SK-N-SH (cell line): ENCODE measurements at regions of chr3 and their contacts with region 1.

Region 1: DNA sequence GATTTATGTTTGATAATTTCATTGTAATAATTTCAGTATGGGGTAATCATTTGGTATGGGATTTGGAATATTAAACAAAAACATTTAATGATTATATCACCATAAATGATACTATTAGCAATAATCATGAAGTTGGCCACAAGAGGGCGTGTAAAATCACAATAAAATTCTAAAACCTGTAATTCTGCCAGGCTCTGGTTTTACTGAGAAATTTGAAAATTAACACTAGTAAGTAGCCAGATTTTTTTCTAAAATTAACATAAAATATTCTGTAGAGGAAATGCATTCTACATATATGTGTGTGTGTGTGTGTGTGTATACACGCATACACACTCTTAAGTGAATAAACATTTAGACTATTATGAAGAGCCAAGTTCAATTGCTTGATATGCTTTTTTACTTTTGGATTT is 40.5 kb downstream of the FEZF2 start:
- DNase-seq: peak; percentile 9
- H3K4me3 ChIP-seq: no peak overlapping the region
- H3K27ac ChIP-seq: no peak overlapping the region
- H3K4me1 ChIP-seq: no peaks in the 10 kb centered on the region
- H3K27me3 ChIP-seq: no peaks in the 10 kb centered on the region
- CTCF ChIP-seq: peak; percentile 83
- EP300 ChIP-seq: no peak
- RAD21 ChIP-seq: peak; percentile 62

Region 2: DNA sequence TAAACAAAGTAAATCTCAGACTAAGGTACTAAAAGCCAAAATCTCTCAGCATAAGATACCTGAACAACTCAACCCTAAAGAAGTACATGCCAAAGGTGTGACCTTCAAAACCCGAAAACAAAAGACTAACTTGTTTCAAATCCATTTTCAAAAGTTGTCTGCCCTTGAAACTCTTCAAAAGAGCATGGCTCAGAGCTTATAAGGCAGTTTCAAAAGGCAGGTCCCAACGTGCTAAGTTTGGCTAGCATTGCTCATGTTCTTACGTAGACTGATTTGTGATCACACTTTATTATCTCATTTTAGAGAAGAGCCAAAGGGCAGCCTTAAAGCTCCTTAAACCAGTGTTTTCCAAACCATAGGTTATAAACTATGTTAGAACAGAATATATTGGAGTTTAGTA is 71.7 kb before region 1 on chr3:
- CTCF ChIA-PET with region 1: interaction called, 10 read pairs
- POLR2A ChIA-PET with region 1: no interaction called
- DNase-seq: no peak
- H3K4me3 ChIP-seq: no peak overlapping the region
- H3K27ac ChIP-seq: no peak overlapping the region
- H3K4me1 ChIP-seq: peaks cover 0 to 3% of the 10 kb centered on the region in 2 experiments; a peak in 2 of 4 replicates
- H3K27me3 ChIP-seq: no peaks in the 10 kb centered on the region
- CTCF ChIP-seq: no peak
- EP300 ChIP-seq: no peak
- RAD21 ChIP-seq: no peak

Region 3: DNA sequence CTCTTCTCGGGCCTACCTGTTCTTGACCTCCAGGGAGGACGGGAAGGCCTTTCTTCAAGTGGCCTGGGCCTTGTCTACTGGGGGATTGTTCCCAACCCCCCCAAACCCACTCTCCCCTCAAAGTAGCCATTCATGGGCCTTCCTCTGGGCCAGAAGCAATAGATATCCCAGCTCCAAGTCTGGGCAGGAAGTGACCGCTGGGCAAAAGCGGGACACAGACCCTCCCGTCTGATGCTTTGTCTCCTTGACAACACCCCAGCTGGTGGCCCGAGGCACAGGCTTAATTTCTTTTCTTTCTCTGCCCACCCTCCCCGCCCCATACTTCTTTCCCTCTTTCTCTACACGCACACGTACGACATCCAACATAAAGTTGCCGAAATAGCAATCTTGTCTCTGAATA is 81.9 kb after region 1 on chr3:
- CTCF ChIA-PET with region 1: no interaction called
- POLR2A ChIA-PET with region 1: no interaction called
- DNase-seq: peak; percentile 20
- H3K4me3 ChIP-seq: no peak overlapping the region
- H3K27ac ChIP-seq: no peak overlapping the region
- H3K4me1 ChIP-seq: no peaks in the 10 kb centered on the region; a peak in 1 of 4 replicates
- H3K27me3 ChIP-seq: no peaks in the 10 kb centered on the region
- CTCF ChIP-seq: no peak
- EP300 ChIP-seq: no peak
- RAD21 ChIP-seq: no peak

Region 4: DNA sequence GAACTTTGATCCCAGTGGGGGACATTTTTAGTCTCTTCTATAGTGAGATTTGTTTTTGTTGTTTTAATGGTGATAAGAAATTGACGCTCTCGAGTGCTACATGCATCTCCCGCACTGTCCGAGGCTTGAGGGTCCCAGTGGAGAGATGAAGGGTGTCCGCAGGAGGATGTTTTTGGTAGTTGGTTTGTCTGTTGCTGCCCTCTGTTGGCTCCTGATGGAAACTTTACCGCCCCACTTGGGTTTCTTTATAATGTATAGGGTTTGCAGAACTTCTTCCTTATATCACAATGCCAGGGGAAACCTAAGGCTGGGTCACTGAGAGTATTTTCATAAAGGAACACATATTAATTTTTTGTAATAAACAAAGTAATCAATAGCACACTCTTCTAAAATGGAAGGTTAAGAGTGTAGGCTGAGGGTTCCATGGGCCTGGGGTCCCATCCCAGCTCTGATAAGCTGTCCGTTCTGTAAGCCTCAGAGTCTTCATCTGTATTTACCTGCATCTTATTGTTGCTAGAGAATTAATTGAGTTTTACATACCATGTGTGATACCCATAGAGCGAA is 225.8 kb after region 1 on chr3:
- CTCF ChIA-PET with region 1: interaction called, 142 read pairs
- POLR2A ChIA-PET with region 1: no interaction called
- DNase-seq: peak; percentile 53
- H3K4me3 ChIP-seq: no peak overlapping the region; a peak in 1 of 4 replicates
- H3K27ac ChIP-seq: no peak overlapping the region
- H3K4me1 ChIP-seq: peaks cover 0 to 10% of the 10 kb centered on the region in 2 experiments; a peak in 3 of 4 replicates
- H3K27me3 ChIP-seq: no peaks in the 10 kb centered on the region
- CTCF ChIP-seq: peak; percentile 69
- EP300 ChIP-seq: no peak
- RAD21 ChIP-seq: peak; percentile 82